Activated CD8-positive, alpha-beta T cell treated with anti-CD3 and anti-CD28 coated beads for 36 hours (primary cell): ENCODE measurements at regions of chr3 and their contacts with region 1.

Region 1: DNA sequence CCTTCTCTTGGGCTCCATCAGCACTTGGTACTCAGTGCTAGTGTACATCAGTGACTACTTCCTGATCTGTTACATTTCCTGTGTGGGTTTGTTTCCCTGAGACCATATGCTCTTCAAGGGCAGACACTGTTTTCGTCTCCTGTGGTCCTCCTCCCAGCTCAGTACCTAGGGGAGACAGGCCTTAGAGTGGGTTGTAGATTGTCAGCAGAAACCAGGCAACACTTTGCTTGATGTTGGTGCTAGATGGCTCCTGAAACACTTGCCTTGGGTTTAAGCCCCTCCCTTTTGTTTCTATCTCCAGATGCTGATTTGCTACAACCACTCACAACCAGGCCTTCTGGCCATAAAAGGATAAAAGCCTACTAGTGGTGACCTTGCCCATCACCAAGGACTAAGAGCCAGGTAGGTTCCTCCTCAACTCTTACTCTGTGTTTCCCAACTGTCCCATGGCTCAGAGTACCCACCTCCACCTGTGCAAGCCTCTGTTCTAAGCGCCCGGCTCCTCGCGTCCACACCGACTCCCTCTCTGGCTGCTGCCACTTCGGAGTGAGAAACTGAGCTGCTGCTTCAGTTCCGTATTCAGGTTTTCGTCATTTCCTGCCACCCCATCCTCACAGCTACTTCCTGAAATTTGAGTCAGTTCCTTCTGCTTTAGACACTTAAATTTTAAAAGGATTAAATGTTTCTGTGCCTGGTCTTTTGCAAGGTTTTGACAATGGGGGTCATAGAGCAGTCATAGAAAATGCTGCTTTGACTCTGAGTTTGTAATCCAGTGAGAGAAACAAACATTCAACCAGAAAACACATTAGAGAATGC is at the start of gene HCLS1:
- DNase-seq: peak; percentile 79
- ATAC-seq: peak; percentile 86
- H3K4me3 Mint-ChIP-seq: peak within 1 kb of the TSS; percentile 98
- H3K27ac Mint-ChIP-seq: peak within 1 kb of the TSS; percentile 99
- H3K4me1 Mint-ChIP-seq: peaks cover 49% of the 10 kb centered on the region
- H3K27me3 Mint-ChIP-seq: no peaks in the 10 kb centered on the region
- CTCF ChIP-seq: peak; percentile 20
- total RNA-seq, gene HCLS1: 196 to 199 TPM

Region 2: DNA sequence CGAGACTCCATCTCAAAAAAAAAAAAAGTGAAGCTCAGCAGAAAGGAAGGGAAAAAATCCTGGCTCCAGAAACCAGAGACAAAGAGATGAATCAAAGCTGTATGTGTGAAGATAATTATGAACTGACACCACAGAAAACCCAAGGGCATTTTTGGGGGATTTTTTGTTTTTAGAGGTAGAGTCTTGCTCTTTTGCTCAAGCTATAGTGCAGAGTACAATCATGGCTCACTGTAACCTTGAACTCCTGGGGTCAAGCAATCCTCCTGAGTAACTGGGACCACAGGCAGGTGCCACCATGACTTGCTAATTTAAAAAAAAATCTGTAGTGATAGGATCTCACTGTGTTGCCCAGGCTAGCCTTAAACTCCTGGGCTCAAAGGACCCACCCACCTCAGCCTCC is 22.6 kb before region 1 on chr3:
- CTCF ChIA-PET with region 1: no interaction called
- POLR2A ChIA-PET with region 1: no interaction called
- intact Hi-C with region 1: no loop called
- DNase-seq: no peak
- ATAC-seq: peak; percentile 30
- H3K4me3 Mint-ChIP-seq: no peak overlapping the region
- H3K27ac Mint-ChIP-seq: peak overlapping the region; percentile 46
- H3K4me1 Mint-ChIP-seq: peaks cover 23% of the 10 kb centered on the region
- H3K27me3 Mint-ChIP-seq: no peaks in the 10 kb centered on the region
- CTCF ChIP-seq: no peak

Region 3: DNA sequence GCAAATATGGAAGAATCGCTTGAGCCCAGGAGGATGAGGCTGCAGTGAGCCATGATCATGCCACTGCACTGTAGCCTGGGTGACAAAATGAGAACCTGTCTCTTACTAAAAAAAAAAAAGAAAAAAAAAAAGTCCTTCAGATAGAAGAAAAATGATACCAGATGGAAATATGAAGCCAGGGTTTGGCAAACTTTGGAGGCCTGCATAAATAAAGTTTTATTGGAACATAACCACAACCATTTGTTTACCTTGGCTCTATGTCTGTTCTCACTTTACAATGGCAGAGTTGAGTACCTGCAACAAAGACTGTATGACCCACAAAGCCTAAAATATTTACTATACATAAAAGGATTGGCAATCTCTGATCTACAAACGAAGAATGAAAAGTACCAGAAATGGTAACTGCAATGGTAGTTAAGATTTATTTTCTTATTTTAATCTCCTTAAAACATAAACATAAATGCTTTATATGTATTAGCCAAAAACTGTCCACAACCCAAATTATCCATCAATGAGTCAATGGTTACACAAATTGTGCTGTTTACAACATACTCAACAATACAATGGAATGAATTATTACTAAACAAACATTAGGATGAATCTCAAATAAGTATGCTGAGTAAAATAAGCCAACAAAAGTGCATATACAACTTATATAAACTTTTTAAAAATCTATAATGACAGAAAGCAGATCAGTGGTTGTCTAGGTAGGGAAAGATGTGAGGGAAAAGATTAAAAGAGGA is 47.1 kb after region 1 on chr3:
- CTCF ChIA-PET with region 1: no interaction called
- POLR2A ChIA-PET with region 1: no interaction called
- intact Hi-C with region 1: no loop called
- DNase-seq: no peak
- ATAC-seq: no peak
- H3K4me3 Mint-ChIP-seq: no peak overlapping the region
- H3K27ac Mint-ChIP-seq: no peak overlapping the region
- H3K4me1 Mint-ChIP-seq: peaks cover 10% of the 10 kb centered on the region
- H3K27me3 Mint-ChIP-seq: no peaks in the 10 kb centered on the region
- CTCF ChIP-seq: no peak

Region 4: GRCh38 chr3:121749276-121750086 is 88.9 kb after region 1 on chr3 and contains the start of gene GOLGB1:
- CTCF ChIA-PET with region 1: no interaction called
- POLR2A ChIA-PET with region 1: interaction called, 6 read pairs
- intact Hi-C with region 1: loop called (anchors 2 kb)
- DNase-seq: peak; percentile 98
- ATAC-seq: peak; percentile 96
- H3K4me3 Mint-ChIP-seq: no peak within 1 kb of the TSS
- H3K27ac Mint-ChIP-seq: no peak within 1 kb of the TSS
- H3K4me1 Mint-ChIP-seq: peaks cover 11% of the 10 kb centered on the region
- H3K27me3 Mint-ChIP-seq: peaks cover 1% of the 10 kb centered on the region
- CTCF ChIP-seq: no peak
- total RNA-seq, gene GOLGB1: 15.0 to 16.4 TPM